HepG2 (cell line): ENCODE measurements at regions of chr20 and their contacts with region 1.

Region 1: GRCh38 chr20:43583982-43584432 is 6.7 kb upstream of the IFT52 start:
- DNase-seq: peak; percentile 95
- ATAC-seq: peak; percentile 83
- H3K4me3 ChIP-seq: no peak overlapping the region
- H3K27ac ChIP-seq: peak overlapping the region; percentile 46
- H3K4me1 ChIP-seq: peaks cover 36% of the 10 kb centered on the region
- H3K27me3 ChIP-seq: no peaks in the 10 kb centered on the region
- CTCF ChIP-seq: 0 out of 2 replicates have a peak, but pooled peaks have one; percentile 5
- EP300 ChIP-seq: peak; percentile 52 to 62; a peak in 3 of 4 replicates
- POLR2A ChIP-seq: no peak
- RAD21 ChIP-seq: no peak

Region 2: DNA sequence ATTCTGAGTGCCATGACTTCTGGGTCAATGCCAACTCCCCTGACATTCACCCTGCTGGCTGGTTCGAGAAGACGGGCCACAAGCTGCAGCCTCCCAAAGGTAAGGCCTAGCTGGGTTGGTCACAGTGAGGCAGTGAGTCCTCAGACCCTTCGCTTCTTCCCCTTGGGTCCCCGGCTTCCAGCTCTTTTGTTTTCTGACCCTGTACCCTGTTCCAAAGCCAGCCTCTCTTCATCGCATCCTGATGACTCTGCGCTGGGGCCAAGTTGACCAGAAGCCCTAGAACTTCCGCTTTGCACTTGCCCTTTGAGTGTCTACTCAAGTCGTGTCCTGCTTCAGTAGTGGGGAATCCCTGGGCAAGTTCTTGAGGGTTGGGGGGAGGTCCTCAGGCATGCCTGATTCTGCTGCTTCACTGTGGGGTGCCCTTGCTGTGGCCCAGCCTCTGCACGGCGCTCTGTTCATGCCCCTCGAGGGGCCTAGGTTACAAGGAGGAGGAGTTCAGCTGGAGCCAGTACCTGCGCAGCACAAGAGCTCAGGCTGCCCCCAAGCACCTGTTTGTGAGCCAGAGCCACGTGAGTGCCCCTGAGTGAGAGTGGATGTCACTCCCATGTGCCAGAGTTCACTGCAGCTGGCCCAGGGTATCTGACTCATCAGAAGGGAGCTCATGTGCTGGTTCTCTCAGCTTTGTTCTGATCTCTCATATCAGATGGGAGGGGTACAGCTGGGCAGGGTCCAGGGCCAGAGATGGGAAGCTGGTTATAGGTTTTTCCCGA is 53.5 kb before region 1 on chr20:
- CTCF ChIA-PET with region 1: no interaction called
- POLR2A ChIA-PET with region 1: interaction called, 6 read pairs
- in situ Hi-C with region 1: no loop called
- intact Hi-C with region 1: loop called (anchors 1 kb)
- DNase-seq: peak; percentile 91
- ATAC-seq: peak; percentile 89
- H3K4me3 ChIP-seq: no peak overlapping the region
- H3K27ac ChIP-seq: peak overlapping the region; percentile 65
- H3K4me1 ChIP-seq: peaks cover 39% of the 10 kb centered on the region
- H3K27me3 ChIP-seq: no peaks in the 10 kb centered on the region
- CTCF ChIP-seq: peak; percentile 44
- EP300 ChIP-seq: peak in 1 of 2 experiments; percentile 43; a peak in 1 of 4 replicates
- POLR2A ChIP-seq: no peak
- RAD21 ChIP-seq: peak; percentile 58